Activated B cell treated with CpG ODN at 0.5 μM for 24 hours (primary cell): ENCODE measurements at regions of chr10 and their contacts with region 1.

Region 1: GRCh38 chr10:103096153-103096552 is 96.9 kb downstream of the NT5C2 start:
- DNase-seq: no peak
- ATAC-seq: no peak
- H3K4me3 Mint-ChIP-seq: no peak overlapping the region
- H3K27ac Mint-ChIP-seq: no peak overlapping the region
- H3K4me1 Mint-ChIP-seq: peaks cover 14% of the 10 kb centered on the region
- H3K27me3 Mint-ChIP-seq: no peaks in the 10 kb centered on the region
- CTCF ChIP-seq: no peak

Region 2: GRCh38 chr10:102975483-102976379 is 120.4 kb before region 1 on chr10:
- CTCF ChIA-PET with region 1: no interaction called
- POLR2A ChIA-PET with region 1: no interaction called
- intact Hi-C with region 1: no loop called
- DNase-seq: no peak
- ATAC-seq: no peak
- H3K4me3 Mint-ChIP-seq: no peak overlapping the region
- H3K27ac Mint-ChIP-seq: no peak overlapping the region
- H3K4me1 Mint-ChIP-seq: no peaks in the 10 kb centered on the region
- H3K27me3 Mint-ChIP-seq: no peaks in the 10 kb centered on the region
- CTCF ChIP-seq: no peak

Region 3: GRCh38 chr10:103295374-103296015 is 199.3 kb after region 1 on chr10:
- CTCF ChIA-PET with region 1: no interaction called
- POLR2A ChIA-PET with region 1: interaction called, 10 read pairs
- intact Hi-C with region 1: no loop called
- DNase-seq: no peak
- ATAC-seq: no peak
- H3K4me3 Mint-ChIP-seq: no peak overlapping the region
- H3K27ac Mint-ChIP-seq: no peak overlapping the region
- H3K4me1 Mint-ChIP-seq: no peaks in the 10 kb centered on the region
- H3K27me3 Mint-ChIP-seq: peaks cover 5% of the 10 kb centered on the region
- CTCF ChIP-seq: no peak